ENCODE measurements at regions of chr3 and their contacts with region 1.

Region 1: DNA sequence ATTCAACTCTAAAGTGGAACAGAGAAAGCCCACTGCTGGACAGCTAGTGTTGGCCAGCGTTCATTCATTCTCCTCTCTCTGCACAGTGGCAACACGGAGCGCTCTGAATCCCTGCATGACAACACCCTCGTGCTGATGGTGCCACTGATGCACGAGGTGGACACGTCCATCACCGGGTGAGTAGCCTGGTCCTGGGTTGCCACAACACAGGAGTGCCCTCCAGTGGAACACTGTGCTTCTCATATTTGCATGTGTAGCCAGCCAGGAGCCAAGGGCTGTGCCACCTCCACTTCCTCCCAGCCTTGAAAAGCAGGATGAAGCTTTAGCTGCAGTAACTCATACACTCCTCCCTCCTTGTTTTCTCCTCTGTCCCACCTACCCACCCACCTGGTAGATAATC is 120.0 kb upstream of the CTDSPL start:
- DNase-seq: peak in 1 of 2 donors; percentile 27
- ATAC-seq: peak; percentile 23 to 27
- H3K4me3 ChIP-seq: no peak overlapping the region
- H3K27ac ChIP-seq: no peak overlapping the region
- H3K4me1 ChIP-seq: no peaks in the 10 kb centered on the region
- H3K27me3 ChIP-seq: no peaks in the 10 kb centered on the region
- CTCF ChIP-seq: peak in 3 of 5 experiments; percentile 19 to 40 (median 35)
- POLR2A ChIP-seq: no peak

Region 2: GRCh38 chr3:36635731-36636130 is 1105.9 kb before region 1 on chr3:
- in situ Hi-C with region 1: no loop called
- intact Hi-C with region 1: no loop called
- DNase-seq: no peak
- ATAC-seq: no peak
- H3K4me3 ChIP-seq: no peak overlapping the region
- H3K27ac ChIP-seq: no peak overlapping the region
- H3K4me1 ChIP-seq: no peaks in the 10 kb centered on the region
- H3K27me3 ChIP-seq: no peaks in the 10 kb centered on the region
- CTCF ChIP-seq: no peak
- POLR2A ChIP-seq: no peak

Region 3: DNA sequence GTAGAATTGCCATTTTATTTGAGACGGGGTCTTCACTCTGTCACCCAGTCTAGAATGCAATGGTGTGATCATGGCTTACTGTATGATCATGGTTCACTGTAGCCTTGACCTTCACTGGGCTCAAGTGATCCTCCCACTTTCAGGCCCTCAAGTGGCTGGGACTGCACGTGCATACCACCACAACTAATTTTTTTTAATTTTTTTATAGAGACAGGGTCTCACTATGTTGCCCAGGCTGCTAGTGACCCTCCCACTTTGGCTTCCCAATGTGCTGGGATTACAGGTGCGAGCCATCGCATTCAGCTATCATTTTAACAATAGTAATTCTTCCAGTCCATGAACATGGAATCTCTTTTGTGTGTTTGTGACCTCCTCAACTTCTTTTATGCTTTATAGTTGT is 760.6 kb before region 1 on chr3:
- in situ Hi-C with region 1: no loop called
- intact Hi-C with region 1: no loop called
- DNase-seq: no peak
- ATAC-seq: no peak
- H3K4me3 ChIP-seq: no peak overlapping the region
- H3K27ac ChIP-seq: no peak overlapping the region
- H3K4me1 ChIP-seq: no peaks in the 10 kb centered on the region
- H3K27me3 ChIP-seq: no peaks in the 10 kb centered on the region
- CTCF ChIP-seq: no peak
- POLR2A ChIP-seq: no peak

Region 4: DNA sequence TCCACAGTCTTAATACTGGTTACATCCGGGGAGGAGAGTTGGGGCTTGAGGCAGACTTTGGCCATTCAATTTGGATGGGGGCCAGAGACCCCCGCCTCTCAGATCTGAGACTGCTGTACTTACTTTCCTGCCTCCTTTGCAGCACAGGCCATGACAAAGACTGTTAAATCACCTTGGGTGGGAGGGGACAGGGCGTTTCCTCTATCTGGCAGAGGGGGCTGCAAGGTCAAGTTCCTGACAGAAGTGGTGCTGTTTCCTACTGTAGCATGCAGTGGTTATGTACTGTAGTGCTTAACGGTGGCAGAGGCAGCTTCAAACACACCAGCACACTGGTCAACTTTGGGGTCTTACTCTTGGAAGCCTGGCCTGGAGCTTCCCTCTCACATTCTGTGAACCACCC is 306.1 kb before region 1 on chr3:
- in situ Hi-C with region 1: loop called in 1 of 4 experiments (anchors 25 kb)
- intact Hi-C with region 1: no loop called
- DNase-seq: no peak
- ATAC-seq: no peak
- H3K4me3 ChIP-seq: no peak overlapping the region
- H3K27ac ChIP-seq: no peak overlapping the region
- H3K4me1 ChIP-seq: no peaks in the 10 kb centered on the region
- H3K27me3 ChIP-seq: no peaks in the 10 kb centered on the region
- CTCF ChIP-seq: no peak
- POLR2A ChIP-seq: no peak

Region 5: DNA sequence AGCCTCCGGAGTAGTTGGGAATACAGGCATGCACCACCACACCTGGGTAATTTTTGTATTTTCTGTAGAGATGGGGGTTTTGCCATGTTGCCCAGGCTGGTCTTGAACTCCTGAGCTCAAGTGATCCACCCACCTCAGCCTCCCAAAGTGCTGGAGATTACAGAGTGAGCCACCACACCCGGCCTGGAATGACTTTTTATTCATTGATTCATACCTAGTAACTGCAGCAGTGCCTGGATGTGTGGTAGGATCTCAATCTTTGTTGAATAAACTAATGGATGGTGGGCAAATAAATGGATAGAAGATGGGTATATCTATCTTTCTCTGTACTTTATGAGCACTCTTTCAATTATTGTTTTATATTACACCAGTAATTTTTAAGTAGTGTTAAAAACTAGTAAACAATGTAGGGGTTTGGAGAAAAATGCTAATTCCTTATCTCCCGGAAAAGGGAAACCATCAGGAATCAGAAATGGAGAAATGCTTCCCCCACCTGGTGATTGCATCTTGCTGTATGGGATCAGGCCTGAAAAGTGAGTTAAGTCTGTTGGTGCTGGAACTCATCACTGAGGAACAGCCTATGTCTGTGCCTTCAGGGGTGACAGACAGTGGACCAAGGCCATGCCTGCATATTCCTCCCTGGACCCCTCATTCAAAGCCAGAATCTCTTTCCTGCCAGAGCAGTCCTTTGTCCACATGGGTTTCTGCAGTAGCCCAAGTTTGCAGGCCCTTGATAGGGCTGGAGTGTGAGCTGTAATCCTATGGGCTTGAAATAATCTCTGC is 41.0 kb before region 1 on chr3:
- in situ Hi-C with region 1: no loop called
- intact Hi-C with region 1: no loop called
- DNase-seq: no peak
- ATAC-seq: no peak
- H3K4me3 ChIP-seq: no peak overlapping the region
- H3K27ac ChIP-seq: no peak overlapping the region
- H3K4me1 ChIP-seq: no peaks in the 10 kb centered on the region
- H3K27me3 ChIP-seq: peaks cover 0 to 2% (median 0%) of the 10 kb centered on the region in 3 donors
- CTCF ChIP-seq: no peak
- POLR2A ChIP-seq: no peak